Ovary (tissue), 10 donors: ENCODE measurements at regions of chr12 and their contacts with region 1.

Region 1: DNA sequence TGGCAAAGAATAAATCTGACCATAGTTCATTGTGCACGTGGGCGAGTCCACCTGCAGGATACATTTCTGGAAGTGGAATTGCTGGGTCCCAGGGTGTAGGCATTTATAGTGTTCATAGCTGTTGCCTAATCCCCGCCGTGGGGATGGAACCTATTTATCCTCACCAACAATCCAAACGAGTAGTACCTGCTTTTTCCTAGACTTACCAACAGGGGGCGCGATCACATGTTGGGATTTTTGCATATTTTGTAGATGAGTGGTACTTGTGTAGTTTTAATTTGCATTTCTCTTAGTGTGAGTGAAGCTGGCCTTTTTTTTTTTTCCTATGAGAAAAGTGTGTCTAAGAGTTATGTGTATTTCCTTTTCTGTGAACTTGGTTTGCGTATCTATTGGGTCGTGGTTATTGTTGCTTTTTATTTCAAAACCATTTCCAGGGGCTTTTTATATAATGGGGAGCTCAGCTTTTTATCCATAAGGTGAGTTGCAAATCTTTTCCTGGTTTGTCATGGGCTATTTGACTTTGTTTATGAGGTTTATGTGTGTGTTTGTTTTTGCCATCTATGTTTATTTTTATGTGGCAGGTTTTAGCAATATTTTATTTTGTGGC is 67.2 kb downstream of the CCDC92 start:
- DNase-seq: peak; percentile 39 to 68 (median 56)
- H3K4me3 ChIP-seq: no peak overlapping the region
- H3K27ac ChIP-seq: no peak overlapping the region
- H3K4me1 ChIP-seq: no peaks in the 10 kb centered on the region
- H3K27me3 ChIP-seq: no peaks in the 10 kb centered on the region
- CTCF ChIP-seq: peak; percentile 43 to 49 (median 48)
- EP300 ChIP-seq: no peak
- POLR2A ChIP-seq: no peak

Region 2: DNA sequence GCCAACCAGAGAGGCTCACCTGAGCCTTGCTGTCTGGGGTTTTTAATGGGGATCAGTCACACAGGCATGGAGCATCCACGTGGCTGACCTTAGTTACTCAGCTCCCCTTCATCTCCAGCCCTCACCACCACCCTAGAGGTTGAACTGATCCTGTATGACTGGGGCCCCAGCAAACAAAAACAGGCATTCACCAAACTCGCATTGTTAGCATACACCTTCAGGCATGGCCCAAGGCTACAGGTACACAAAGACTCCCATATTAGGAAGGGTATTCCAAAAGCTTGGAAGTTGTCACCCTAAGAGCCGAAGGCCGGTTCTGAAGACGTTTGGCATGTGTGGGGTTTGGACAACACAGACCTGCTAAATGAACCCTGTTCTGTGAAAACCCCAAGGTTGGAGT is 133.3 kb before region 1 on chr12:
- intact Hi-C with region 1: no loop called
- DNase-seq: no peak
- H3K4me3 ChIP-seq: no peak overlapping the region
- H3K27ac ChIP-seq: no peak overlapping the region
- H3K4me1 ChIP-seq: no peaks in the 10 kb centered on the region
- H3K27me3 ChIP-seq: no peaks in the 10 kb centered on the region
- CTCF ChIP-seq: no peak
- EP300 ChIP-seq: no peak
- POLR2A ChIP-seq: no peak

Region 3: DNA sequence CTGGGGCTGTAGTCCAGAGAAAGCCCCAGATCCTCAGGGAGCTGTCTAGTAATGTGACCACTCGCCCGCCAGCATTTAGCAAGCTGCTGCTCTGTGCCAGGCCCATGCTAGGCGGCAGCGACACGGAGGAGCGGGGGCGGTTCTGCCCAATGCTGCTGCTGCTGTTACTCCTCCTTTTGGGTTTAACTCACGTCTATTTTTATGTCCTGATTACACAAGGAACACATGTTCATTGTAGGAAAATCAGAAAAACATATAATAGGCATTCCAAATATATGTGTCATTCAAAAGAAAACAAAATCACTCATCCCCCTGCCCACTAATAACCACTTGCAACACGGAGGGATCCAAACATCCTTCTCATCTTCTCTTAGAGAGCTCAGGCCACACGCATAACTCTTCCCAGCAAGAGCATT is 36.8 kb after region 1 on chr12:
- intact Hi-C with region 1: no loop called
- DNase-seq: no peak
- H3K4me3 ChIP-seq: no peak overlapping the region
- H3K27ac ChIP-seq: no peak overlapping the region
- H3K4me1 ChIP-seq: no peaks in the 10 kb centered on the region
- H3K27me3 ChIP-seq: no peaks in the 10 kb centered on the region
- CTCF ChIP-seq: no peak
- EP300 ChIP-seq: no peak
- POLR2A ChIP-seq: no peak

Region 4: DNA sequence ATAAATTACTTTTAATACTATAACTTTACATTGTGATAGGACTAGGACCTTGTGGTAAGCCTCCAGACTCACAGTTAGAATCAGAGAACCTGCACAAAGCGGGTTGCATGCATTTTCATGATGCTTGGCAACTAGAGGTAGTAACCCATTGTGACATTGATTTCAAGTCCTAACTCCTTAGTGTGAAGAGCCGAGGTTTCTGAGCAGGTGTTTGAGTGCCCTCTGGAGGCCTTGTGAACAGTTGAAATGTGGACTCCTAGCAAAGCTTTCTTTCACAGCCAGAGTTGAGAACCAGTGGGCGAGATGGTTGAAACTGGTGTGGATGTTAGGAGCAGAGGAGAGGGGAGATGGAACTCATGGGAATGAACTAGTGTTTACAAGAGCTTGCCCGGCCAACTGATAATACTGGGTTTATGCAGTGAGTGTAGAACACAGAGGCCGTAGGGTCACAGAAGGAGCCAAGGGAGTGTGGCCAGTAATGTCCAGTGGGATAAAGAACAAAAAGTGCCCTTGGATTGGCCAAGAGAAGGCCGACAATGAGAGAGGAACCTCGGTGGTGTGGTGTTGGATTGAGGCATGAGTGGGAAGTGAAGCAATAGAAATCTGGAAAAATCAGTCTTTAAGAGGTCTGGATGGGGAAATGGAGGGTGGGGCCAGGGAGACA is 78.5 kb after region 1 on chr12:
- intact Hi-C with region 1: loop called in 1 of 4 experiments (anchors 10 kb)
- DNase-seq: peak; percentile 21 to 51 (median 43)
- H3K4me3 ChIP-seq: no peak overlapping the region
- H3K27ac ChIP-seq: no peak overlapping the region
- H3K4me1 ChIP-seq: peaks cover 5% of the 10 kb centered on the region
- H3K27me3 ChIP-seq: no peaks in the 10 kb centered on the region
- CTCF ChIP-seq: peak; percentile 7 to 37 (median 33)
- EP300 ChIP-seq: no peak
- POLR2A ChIP-seq: no peak

Region 5: DNA sequence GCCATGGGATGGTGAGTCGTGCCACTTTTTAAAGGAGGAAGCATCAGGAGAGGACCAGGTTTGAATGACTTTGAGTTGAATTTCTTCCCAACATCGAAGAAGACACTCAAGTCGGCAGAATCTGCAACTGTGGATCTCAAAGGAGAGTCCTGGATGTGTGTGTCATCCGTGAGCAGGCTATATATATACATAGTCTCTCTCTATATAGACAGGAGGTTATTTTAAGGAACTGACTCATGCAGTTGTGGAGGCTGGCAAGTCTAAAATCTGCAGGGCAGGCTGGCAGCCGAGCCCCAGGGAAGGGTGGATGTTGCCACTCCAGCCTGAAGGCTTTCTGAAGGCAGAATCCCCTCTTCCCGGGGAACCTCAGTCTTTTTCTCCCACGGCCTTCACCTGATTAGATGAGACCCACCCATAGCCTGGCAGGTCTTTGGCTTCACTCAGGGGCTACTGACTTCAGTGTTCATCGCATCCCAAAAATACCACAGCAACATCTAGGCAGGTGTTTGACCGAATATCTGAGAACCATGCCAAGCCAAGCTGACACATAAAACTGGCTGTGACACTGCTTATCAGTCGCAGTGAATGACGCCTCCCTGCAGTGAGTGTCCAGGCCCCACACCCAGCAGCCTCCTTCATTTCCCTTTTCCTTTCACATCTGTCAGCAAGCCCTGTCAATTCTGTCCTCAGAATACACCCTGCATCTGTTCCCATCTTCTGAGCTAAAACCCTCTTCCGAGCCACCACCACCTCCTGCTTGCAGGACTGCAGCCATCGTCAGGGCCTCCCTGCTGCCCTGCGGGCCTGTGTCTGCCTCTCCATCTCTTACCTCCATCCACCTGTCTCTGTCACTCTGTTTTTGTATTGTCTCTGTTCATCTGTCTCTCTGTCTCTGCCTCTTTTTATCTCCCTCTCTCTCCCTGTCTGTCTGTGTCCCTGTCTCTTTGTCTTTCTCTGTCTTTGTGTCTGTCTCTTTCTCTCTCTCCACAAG is 121.6 kb after region 1 on chr12:
- intact Hi-C with region 1: loop called in 1 of 4 experiments (anchors 10 kb)
- DNase-seq: no peak
- H3K4me3 ChIP-seq: no peak overlapping the region
- H3K27ac ChIP-seq: no peak overlapping the region
- H3K4me1 ChIP-seq: no peaks in the 10 kb centered on the region
- H3K27me3 ChIP-seq: no peaks in the 10 kb centered on the region
- CTCF ChIP-seq: no peak
- EP300 ChIP-seq: no peak
- POLR2A ChIP-seq: no peak